PC-3 (cell line): ENCODE measurements at regions of chr6 and their contacts with region 1.

Region 1: GRCh38 chr6:109202409-109203284 is 107.3 kb downstream of the CEP57L1 start:
- DNase-seq: peak; percentile 36
- ATAC-seq: no peak
- H3K4me3 ChIP-seq: no peak overlapping the region
- H3K27ac ChIP-seq: peak overlapping the region; percentile 45
- H3K4me1 ChIP-seq: peaks cover 22% of the 10 kb centered on the region
- H3K27me3 ChIP-seq: no peaks in the 10 kb centered on the region
- CTCF ChIP-seq: no peak

Region 2: GRCh38 chr6:109139109-109139508 is 63.5 kb before region 1 on chr6:
- CTCF ChIA-PET with region 1: no interaction called
- POLR2A ChIA-PET with region 1: no interaction called
- intact Hi-C with region 1: no loop called
- DNase-seq: peak; percentile 65
- ATAC-seq: peak; percentile 85
- H3K4me3 ChIP-seq: no peak overlapping the region
- H3K27ac ChIP-seq: 0 out of 2 replicates have a peak overlapping the region, but pooled peaks have one; percentile 1
- H3K4me1 ChIP-seq: peaks cover 10% of the 10 kb centered on the region
- H3K27me3 ChIP-seq: no peaks in the 10 kb centered on the region
- CTCF ChIP-seq: no peak

Region 3: DNA sequence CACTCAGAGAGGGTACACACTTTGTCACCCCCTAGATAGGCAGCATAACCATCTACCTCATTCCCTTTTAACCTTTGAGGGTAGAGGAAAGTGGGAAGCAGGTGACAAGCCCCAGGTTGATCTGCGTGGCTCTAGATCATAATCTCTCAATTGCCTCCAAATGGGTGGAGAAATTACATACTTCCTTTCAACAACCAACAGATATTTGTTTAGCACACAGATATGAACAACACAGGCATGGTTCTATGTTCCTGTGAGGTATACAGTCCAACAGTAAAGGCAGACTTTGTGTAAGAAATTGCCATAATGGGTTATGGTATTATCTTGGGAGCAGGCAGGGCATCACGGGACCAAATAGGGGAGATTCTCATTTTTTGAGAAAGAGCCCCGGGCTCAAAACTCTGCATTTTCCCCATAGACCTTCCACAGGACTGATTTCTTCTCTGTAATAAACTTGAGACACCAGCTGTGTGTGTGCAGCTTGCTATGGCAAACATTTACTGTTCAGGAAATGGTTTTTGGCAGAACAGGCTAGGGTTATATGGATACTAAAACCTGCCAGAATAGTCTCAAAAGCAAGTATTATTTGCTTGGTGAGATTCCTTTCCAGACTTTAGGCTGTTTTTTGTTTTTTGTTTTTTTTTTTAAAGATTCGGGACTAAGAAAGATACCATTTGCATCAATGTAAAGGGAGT is 53.4 kb after region 1 on chr6:
- CTCF ChIA-PET with region 1: no interaction called
- POLR2A ChIA-PET with region 1: no interaction called
- intact Hi-C with region 1: loop called (anchors 5 kb)
- DNase-seq: peak; percentile 31
- ATAC-seq: peak; percentile 74
- H3K4me3 ChIP-seq: no peak overlapping the region
- H3K27ac ChIP-seq: peak overlapping the region; percentile 46
- H3K4me1 ChIP-seq: peaks cover 43% of the 10 kb centered on the region
- H3K27me3 ChIP-seq: no peaks in the 10 kb centered on the region
- CTCF ChIP-seq: no peak

Region 4: DNA sequence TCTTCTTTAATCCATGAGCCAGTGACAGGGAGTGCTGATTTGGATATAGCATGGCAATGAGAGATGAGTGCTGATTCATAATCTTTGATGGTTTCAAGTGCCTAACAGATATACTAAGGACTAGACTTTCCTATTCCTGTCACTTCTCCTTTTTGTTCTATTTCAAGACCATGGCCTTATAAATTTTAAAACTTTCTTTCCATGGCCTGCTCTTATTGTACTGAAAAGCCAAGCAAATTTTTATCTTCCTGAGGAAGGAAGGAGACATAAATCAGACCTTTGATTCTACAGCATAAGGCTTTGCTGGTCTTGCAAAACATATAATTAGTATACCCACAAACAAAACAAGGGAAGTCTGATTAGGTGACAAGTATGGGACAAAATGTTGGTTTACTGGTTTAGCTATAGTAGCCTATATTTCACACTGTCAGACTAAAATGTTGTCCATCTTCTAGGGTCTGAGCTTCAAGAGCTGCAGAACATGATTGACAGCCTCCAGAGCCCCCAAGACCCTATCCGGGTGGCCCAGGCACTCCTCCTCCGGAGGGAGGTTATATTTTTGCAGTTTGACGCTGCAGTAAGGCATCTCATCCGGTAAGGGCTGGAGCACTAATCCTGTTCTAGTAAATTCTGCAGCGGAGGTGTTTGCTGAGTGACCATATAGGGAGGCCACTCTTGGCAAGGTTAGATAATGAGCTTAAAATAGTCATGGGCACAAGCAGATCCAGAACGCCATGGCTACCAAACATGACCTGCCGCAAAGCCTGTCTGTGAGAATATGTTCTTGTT is 97.3 kb after region 1 on chr6:
- CTCF ChIA-PET with region 1: no interaction called
- POLR2A ChIA-PET with region 1: no interaction called
- intact Hi-C with region 1: loop called (anchors 5 kb)
- DNase-seq: no peak
- ATAC-seq: peak; percentile 39
- H3K4me3 ChIP-seq: no peak overlapping the region
- H3K27ac ChIP-seq: no peak overlapping the region
- H3K4me1 ChIP-seq: peaks cover 12% of the 10 kb centered on the region; the same call in 1 of the 2 replicates
- H3K27me3 ChIP-seq: no peaks in the 10 kb centered on the region
- CTCF ChIP-seq: no peak